GM18951 (cell line): ENCODE measurements at regions of chr17 and their contacts with region 1.

Region 1: GRCh38 chr17:72539981-72540897 is 419.4 kb downstream of the SOX9 start:
- POLR2A ChIP-seq: no peak

Region 2: DNA sequence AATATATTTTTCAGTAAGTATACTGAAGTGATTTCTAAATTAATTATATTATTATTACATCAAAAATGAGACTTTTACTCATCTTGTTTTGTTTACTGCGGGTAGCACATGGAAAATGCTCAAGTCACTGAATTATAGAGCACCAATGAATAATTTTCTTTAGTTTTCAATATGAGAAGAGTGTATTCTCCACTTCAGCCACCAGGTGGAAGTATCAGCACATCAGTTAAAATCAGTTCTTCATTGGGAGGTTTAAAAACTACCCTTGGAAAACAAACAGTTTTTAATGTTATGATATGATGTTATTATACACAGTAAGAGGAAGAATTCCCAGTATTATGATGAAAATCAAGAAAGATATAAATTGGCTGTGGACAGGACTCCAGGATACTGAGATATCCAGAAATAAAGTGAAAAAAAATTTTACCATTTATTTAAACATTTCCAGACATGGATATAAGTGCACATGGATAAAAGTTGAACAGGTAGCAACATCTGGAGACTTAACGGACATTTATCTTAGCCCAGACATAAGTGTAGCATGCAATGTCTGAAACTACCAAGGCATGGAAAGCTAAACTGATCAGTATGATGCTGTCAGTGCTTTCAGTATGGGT is 1903.6 kb before region 1 on chr17:
- in situ Hi-C with region 1: loop called (anchors 25 kb)
- POLR2A ChIP-seq: no peak

Region 3: DNA sequence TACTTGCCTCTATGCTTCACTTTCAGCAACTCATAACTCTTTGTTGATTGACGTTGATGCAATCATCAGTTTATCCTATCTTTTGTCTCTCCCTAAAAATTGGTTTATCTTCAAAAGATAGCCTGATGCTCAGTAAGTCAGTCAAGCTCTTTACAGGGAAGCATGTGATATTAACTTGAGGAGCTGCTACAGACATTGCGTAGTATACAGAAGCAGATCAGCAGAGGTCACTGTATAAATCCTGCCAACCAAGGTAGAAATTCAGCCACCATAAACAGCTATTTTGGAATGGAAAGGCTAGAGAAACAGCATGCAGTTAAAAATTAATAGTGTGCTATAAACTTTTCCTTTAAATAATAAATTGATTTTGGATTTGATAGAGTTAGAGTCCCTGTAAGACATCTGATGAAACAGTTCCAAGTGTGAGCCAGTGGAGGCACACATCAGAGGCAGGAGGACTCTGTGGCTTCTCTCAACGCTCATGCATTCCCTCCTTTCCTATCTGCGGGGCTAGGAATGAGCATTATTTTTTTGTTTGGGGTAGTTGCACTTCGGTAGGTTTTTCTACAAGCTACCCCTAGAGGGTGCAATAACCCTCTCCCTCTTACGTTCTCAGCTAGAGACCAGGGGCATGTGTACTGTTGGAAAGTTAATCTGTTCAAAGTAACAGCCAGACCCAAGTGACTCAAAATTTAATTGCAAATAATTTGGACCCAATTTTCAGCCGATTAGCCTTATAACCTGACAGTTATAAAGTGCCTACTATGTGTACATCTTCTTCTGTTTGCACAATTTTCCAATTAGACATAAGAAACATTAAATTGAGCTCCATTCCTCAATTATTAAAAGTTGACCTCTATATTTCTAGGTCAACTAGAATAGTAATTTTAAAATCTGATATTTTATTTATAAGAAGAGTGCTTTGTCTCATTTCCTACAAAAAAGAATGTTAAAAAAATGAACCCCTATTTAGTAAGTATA is 1067.1 kb before region 1 on chr17:
- in situ Hi-C with region 1: loop called (anchors 25 kb)
- POLR2A ChIP-seq: no peak

Region 4: DNA sequence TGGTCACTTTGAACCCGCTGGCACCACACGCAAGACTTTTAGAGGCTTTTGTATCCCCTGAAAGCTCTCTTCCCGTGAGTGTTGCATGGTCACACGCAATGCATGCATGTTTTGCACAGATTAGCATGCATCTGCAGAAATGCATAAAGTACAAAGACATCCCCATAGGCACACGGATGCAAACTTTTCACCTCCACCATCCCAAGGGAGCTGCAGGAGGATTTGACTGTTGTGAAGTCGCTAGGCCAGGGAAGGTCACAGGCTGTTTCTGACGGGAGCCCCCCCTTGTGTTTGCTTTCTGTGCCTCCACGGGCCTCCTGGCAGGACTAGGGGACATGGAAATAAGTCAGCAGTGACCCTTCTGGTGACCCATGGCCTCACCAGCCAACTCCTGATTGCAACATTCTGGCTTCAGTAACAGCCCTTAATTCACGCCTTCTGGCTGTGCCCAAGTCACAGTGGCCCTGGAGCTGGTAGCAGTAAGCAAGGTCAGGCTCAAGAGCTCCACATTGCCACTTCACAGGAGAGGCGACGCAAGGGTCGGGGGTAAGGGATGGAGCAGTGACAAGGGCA is 374.3 kb before region 1 on chr17:
- in situ Hi-C with region 1: no loop called
- POLR2A ChIP-seq: no peak